ENCODE measurements at regions of chr4 and their contacts with region 1.

Region 1: DNA sequence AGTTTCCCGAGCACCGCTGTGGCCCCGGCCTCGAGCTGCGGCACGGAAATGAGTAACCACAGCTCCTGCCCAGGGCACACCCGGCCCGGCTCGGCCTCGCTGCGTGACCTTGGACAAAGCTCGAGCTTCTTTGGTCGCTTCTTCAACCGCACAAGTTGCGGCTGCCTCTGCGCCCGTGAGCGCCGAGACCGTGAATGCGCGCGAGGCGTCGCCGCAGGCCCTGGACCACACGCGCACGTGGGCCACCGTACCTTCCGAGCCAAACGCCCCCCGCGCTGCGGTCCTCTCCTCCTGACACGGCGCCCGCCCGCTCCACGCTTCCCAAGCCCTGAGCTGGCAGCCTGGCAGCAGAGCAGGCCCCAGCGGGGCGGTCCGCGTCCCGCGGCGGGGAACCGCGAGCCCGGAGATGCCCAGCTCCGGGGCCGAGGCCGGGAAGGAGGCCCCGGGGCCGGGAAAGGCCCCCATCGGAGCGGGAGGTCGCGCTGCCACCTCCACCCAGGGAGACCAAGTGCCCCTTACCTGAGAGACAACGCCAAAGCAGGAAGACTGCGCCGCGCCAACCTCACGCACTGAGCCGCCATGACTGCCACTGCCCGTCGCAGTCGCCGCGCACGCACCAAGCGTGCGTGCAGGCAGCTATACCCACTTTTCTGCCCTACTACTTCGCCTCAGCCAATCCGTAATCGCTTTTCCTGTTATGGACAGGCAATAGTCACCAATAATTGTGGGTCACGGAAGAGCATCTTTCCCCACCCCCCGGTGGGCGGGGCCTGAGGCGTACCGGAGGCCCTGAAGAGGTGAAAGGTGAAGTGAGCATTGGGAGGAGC is at the start of gene GRPEL1:
- DNase-seq: peak; percentile 100
- ATAC-seq: peak; percentile 96 to 99 (median 98)
- H3K4me3 ChIP-seq: peak within 1 kb of the TSS; percentile 68 to 99 (median 86)
- H3K27ac ChIP-seq: peak within 1 kb of the TSS; percentile 58 to 98 (median 90)
- H3K4me1 ChIP-seq: peaks cover 7 to 42% (median 30%) of the 10 kb centered on the region in 9 donors
- H3K27me3 ChIP-seq: no peaks in the 10 kb centered on the region
- CTCF ChIP-seq: peak in 1 of 9 donors; percentile 18
- total RNA-seq, gene GRPEL1: 50.8 to 83.3 (median 55.8) TPM

Region 2: DNA sequence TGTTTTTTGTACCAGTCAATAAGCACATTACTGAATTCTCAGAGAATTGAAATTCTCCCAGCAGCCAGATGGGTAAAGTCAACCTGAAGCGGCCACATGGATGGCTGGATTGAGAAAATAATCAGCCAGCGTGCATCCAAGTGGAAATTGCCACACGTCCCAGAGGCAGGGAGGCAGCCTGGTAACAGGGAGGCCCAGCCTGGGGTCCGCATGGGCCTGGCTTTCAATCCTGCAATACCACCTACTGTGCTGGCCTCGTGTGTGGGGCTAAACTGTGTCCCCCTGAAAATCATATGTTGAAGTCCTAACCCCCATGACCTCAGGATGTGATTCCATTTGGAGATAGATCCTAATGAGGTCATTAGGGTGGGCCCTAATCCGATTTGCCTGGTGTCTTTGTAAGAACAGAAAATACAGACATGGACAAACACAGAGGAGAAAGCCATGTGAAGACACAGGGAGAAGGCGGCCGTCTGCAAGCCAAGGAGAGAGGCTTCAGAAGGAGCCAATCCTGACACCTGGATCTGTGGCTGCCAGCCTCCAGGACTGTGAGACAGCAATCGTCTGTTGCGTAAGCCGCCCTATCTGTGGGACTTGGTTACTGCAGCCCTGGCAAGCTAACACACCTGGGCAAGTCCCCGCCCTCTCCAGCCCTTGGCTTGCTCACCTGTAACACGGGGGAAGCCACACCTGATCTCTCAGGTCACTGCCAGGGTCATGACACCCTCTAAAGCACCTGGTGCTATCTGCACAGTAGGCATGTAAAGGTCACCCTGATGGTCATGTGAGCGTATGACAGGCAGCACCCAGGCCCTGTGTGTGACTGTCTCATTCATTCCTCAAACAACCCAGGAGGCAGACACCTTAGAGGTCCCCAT is 957.6 kb before region 1 on chr4:
- intact Hi-C with region 1: no loop called
- DNase-seq: no peak
- ATAC-seq: peak in 1 of 8 donors; percentile 23
- H3K4me3 ChIP-seq: no peak overlapping the region
- H3K27ac ChIP-seq: no peak overlapping the region
- H3K4me1 ChIP-seq: no peaks in the 10 kb centered on the region
- H3K27me3 ChIP-seq: peaks cover 0 to 83% (median 46%) of the 10 kb centered on the region in 7 donors
- CTCF ChIP-seq: no peak

Region 3: DNA sequence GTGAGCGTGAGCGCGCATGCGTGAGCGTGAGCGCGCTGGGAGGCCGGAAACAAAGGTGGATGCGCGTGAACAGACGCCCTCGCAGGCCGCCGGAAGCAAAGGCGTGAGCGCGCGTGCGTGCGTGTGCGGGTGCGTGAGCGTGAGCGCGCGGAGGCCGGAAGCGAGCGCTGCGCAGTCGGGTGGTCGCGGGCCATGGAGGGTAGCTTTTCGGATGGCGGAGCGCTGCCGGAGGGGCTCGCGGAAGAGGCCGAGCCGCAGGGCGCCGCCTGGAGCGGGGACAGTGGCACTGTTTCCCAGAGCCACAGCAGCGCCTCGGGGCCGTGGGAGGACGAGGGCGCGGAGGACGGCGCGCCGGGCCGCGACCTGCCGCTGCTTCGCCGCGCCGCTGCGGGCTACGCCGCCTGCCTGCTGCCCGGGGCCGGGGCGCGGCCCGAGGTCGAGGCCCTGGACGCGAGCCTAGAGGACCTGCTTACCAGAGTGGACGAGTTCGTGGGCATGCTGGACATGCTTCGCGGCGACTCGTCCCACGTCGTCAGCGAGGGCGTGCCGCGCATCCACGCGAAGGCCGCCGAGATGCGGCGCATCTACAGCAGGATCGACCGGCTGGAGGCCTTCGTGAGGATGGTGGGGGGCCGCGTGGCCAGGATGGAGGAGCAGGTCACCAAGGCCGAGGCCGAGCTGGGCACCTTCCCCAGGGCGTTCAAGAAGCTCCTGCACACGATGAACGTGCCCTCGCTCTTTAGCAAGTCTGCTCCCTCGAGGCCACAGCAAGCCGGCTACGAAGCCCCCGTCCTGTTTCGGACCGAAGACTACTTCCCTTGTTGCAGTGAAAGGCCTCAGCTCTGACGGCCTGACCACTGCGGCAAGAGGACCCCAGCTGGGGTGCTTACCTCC is 351.4 kb before region 1 on chr4 and contains the start of gene BLOC1S4:
- intact Hi-C with region 1: loop called in 9 of 10 experiments (anchors 2 to 10 kb)
- DNase-seq: peak; percentile 87 to 90
- ATAC-seq: peak; percentile 91 to 96 (median 94)
- H3K4me3 ChIP-seq: peak within 1 kb of the TSS; percentile 55 to 88 (median 76)
- H3K27ac ChIP-seq: peak within 1 kb of the TSS; percentile 87 to 98 (median 94)
- H3K4me1 ChIP-seq: peaks cover 0 to 40% (median 30%) of the 10 kb centered on the region in 9 donors
- H3K27me3 ChIP-seq: no peaks in the 10 kb centered on the region
- CTCF ChIP-seq: peak in 4 of 9 donors; percentile 19 to 53 (median 30)
- total RNA-seq, gene BLOC1S4: 4.4 to 10.2 (median 7.0) TPM

Region 4: DNA sequence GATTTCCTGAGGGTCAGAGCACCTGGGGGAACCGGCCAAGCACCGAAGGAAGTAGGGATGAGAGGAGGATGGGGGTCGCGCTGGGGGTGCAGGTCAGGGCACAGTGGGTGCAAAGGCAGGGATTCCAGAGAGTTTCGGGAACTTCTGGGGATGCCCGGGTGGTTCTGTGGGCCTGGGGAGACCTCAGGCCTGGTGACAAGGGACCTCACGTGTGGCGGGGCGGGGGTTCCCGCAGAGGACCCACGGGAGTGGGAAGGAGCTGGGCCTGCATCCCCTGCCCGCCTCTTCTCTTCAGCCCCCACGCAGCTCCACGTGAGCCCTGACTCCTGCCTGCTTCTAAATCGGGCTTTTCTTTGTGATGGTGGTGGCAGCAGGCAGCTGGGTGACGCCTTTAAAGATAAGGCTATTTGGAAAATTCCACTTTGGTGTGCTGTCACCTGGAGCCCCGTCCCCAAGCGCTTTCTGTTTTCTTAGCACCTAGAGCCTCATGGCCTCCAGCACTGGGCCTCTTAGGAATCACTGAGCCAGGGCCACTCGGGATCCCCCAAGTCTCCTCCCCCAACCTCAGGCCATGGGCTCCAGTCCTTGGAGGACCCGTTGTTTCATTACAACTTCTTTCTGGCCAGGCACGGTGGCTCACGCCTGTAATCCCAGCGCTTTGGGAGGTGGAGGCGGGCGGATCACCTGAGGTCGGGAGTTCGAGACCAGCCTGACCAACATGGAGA is 165.2 kb before region 1 on chr4:
- intact Hi-C with region 1: loop called in 6 of 10 experiments (anchors 5 to 10 kb)
- DNase-seq: no peak
- ATAC-seq: peak; percentile 9 to 63 (median 21)
- H3K4me3 ChIP-seq: no peak overlapping the region
- H3K27ac ChIP-seq: peak overlapping the region in 1 of 10 donors; percentile 30
- H3K4me1 ChIP-seq: peaks cover 0 to 7% (median 4%) of the 10 kb centered on the region in 9 donors
- H3K27me3 ChIP-seq: peaks cover 0 to 6% (median 0%) of the 10 kb centered on the region in 7 donors
- CTCF ChIP-seq: no peak

Region 5: DNA sequence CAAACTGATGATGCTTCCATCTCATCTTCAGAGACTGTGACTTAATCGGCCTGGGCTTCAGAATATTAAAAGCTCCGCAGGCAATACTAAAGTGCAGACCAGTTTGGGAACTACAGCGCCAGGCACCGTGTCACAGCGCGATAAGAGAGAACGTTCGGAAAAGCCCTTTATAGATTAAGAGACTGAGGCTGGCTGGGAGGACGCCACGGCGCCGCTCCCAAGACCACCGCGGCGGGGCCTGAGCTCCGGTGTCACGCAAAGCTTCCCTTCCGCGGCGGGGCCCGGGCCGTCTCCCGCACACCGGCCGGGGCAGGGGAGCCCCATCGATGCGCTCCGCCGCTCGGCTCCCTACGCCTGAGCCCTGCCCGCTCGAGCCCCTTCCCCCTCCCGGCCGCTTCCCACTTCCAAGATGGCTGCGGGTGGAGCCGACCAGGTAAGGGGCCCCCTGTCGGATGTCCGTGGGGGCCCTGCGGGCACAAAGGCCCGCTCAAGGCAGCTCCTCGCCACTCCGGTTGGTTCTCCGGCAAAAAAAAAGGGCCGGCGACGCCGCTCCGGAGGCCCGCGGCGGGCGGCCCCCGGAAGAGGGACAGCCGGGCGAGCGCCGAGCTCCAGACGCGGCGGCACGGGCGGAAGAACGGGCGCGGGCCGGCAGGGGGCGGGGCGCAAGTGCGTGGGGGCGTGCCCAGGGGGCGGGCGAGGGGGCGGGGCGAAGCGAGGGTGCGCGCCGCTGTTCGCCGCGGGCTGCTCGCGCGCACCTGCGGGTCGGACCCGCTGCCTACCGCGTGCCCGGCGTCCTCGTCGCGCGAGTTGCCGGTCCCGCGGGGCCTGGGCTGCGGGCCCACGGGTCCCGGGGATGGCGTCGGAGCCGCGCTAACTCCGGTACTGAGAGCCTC is 158.3 kb before region 1 on chr4 and contains the start of gene TBC1D14:
- intact Hi-C with region 1: loop called in 7 of 10 experiments (anchors 1 to 10 kb)
- DNase-seq: peak; percentile 89 to 91
- ATAC-seq: peak; percentile 93 to 96 (median 95)
- H3K4me3 ChIP-seq: peak within 1 kb of the TSS; percentile 76 to 99 (median 88)
- H3K27ac ChIP-seq: peak within 1 kb of the TSS; percentile 97 to 100 (median 100)
- H3K4me1 ChIP-seq: peaks cover 16 to 55% (median 41%) of the 10 kb centered on the region in 9 donors
- H3K27me3 ChIP-seq: peaks cover 0 to 6% (median 0%) of the 10 kb centered on the region in 7 donors
- CTCF ChIP-seq: peak in 6 of 9 donors; percentile 19 to 47 (median 23)
- total RNA-seq, gene TBC1D14: 31.5 to 43.7 (median 33.5) TPM

Region 6: DNA sequence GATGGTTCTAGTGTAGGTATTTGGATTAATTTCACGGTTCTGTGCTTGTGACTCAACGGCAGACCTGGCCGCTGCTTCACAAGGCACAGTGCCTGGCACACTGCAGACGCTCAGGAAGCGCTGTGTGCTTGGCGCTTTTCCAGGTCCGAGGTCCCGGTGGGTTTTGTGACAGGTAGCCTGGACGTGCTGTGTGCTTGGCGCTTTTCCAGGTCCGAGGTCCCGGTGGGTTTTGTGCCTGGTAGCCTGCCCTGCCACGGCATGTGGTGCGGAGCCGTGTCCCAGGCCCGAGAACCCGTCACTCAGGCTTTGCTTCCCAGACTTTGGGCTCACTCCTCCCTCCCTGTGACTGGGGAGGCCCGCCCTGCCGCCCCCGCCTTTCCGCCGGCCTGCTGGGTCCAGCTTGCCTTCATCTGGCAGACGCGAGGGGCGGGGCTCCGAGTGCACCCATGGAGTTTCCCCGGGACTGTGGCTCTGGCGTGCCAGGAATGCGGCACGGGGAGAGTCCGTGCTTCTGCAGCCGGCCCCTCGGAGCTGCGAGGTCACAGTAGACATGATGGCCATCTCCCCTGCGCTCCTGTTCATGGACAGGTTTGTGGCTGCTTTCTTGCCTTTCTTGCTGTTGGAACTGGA is 113.8 kb before region 1 on chr4:
- intact Hi-C with region 1: no loop called
- DNase-seq: peak; percentile 82
- ATAC-seq: peak; percentile 86 to 94 (median 90)
- H3K4me3 ChIP-seq: peak overlapping the region in 8 of 10 donors; percentile 1 to 41 (median 34)
- H3K27ac ChIP-seq: no peak overlapping the region
- H3K4me1 ChIP-seq: peaks cover 0 to 27% (median 9%) of the 10 kb centered on the region in 9 donors
- H3K27me3 ChIP-seq: no peaks in the 10 kb centered on the region
- CTCF ChIP-seq: no peak

Region 7: DNA sequence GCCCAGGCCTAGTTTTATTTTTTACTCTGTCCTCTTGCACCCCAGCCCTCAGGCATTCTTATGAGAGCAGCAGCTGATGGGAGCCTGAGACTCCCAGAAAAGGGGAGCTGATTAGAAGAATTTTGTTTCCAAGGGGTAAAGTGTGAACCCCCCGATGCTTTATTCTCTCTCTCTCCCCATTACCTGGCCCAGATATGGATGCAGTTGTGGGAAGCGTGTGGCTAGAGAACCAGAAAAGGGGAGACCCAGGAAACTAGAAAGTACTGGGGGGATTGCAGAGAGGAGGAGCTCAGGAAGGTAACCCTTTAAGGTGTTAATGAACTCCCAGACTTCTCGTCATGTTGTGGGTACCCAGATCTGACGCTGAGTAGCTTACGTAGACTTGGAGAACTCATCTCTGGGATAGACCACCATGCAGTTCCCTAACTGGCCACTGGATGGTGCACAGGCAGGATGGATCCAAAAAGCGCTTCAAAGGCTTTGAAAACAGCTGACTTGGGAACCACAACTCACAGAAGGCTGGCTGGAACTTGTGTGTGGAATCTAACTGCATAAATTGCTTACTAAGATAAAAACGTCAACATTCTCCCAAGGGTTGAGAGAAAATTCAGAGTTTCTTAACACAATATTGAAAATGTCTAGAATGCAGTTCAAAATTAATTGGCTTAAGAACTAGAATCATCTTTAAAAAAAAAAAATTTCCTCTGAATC is 93.4 kb before region 1 on chr4:
- intact Hi-C with region 1: loop called in 8 of 10 experiments (anchors 1 to 10 kb)
- DNase-seq: peak; percentile 79 to 87
- ATAC-seq: peak; percentile 74 to 95 (median 92)
- H3K4me3 ChIP-seq: no peak overlapping the region
- H3K27ac ChIP-seq: peak overlapping the region in 1 of 10 donors; percentile 13
- H3K4me1 ChIP-seq: peaks cover 0 to 25% (median 11%) of the 10 kb centered on the region in 9 donors
- H3K27me3 ChIP-seq: no peaks in the 10 kb centered on the region
- CTCF ChIP-seq: peak; percentile 85 to 99 (median 96)

Region 8: DNA sequence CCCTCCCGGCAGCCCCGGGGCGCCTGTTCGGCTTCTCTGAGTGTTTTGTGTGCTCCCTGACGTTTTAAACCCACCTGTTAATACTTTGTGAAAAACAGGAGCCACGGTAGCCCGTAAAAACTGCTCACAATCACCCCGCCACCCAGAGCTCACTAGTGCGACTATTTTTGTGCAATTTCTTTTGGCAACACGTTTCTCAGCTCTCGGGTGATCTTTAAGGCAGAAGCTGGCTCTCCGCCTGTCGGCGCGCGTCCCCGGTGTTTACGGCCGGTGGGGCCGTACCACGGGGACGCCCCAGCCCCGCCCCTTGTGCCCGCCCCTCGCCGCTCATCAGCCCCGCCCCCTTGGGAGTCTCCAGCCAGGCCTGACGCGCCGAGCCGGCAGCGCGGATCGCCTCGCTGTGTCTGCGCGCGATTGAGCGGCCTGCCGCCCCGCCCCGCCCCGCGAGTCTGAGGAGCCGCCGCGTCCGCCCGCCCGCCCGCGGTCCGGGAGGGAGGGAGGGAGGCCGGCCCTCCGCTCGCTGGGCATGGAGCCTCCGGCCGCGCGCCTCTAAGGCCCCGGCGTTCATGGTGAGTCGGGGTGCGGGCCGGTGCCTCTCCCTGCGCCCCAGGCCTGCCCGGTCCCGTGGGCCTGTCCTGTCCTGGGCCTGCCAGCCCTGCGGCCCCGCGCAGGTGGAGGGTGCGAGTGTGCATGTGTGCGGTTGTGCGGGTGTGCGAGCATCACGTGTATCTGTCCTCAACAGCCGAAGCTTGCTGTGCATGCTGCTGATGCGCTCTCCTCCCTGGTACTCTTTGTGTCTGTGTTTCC is 80.7 kb before region 1 on chr4:
- intact Hi-C with region 1: loop called in 8 of 10 experiments (anchors 1 to 10 kb)
- DNase-seq: peak; percentile 94 to 97
- ATAC-seq: peak; percentile 95 to 98 (median 96)
- H3K4me3 ChIP-seq: peak overlapping the region; percentile 64 to 98 (median 88)
- H3K27ac ChIP-seq: peak overlapping the region; percentile 84 to 98 (median 94)
- H3K4me1 ChIP-seq: peaks cover 13 to 85% (median 57%) of the 10 kb centered on the region in 9 donors
- H3K27me3 ChIP-seq: no peaks in the 10 kb centered on the region
- CTCF ChIP-seq: peak in 2 of 9 donors; percentile 27 to 28

Region 9: DNA sequence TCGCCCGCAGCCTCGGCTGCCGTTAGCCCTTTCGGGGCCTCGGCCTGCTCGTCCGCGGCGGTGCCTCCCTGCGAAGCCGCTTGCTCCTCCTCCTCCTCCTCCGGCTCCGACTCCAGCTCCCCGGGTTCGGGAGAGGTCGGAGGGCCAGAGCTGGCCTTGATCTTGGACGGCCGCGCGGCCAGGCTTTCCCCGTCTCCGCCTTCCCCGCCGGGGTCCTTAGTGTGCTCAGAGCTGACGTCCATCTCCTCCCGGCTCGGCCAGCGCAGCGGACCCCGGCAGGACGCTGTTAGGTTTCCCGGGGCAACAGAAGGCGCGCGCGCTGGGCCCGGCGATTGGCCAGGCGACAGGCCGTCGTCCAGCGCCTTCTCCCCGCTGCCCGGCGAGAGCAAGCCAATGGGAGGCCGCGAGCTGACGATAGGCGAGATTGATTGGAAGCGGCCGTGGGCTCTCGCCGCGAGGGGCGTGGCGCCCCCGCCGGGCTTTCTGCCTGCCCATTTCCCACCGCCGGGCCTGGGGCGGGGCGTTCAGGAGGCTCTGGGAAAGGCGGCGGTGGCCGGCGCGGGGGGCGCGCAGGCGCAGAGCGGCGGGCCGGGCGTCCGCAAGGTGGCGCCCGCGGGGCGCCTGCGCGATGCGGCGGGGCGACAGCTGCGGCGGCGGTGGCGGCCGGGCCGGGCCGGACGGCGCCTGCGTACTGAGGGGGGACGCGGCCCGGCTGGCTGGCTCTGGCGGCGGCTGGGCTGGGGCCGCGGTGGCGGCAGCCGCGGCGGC is 24.8 kb before region 1 on chr4 and contains the start of gene TADA2B:
- intact Hi-C with region 1: loop called in 4 of 10 experiments (anchors 1 to 2 kb)
- DNase-seq: peak; percentile 96 to 98
- ATAC-seq: peak; percentile 94 to 97 (median 97)
- H3K4me3 ChIP-seq: peak within 1 kb of the TSS; percentile 83 to 100 (median 99)
- H3K27ac ChIP-seq: peak within 1 kb of the TSS; percentile 86 to 96 (median 94)
- H3K4me1 ChIP-seq: peaks cover 21 to 55% (median 51%) of the 10 kb centered on the region in 9 donors
- H3K27me3 ChIP-seq: no peaks in the 10 kb centered on the region
- CTCF ChIP-seq: peak in 8 of 9 donors; percentile 28 to 57 (median 44)
- total RNA-seq, gene TADA2B: 26.2 to 40.8 (median 31.5) TPM

Region 10: DNA sequence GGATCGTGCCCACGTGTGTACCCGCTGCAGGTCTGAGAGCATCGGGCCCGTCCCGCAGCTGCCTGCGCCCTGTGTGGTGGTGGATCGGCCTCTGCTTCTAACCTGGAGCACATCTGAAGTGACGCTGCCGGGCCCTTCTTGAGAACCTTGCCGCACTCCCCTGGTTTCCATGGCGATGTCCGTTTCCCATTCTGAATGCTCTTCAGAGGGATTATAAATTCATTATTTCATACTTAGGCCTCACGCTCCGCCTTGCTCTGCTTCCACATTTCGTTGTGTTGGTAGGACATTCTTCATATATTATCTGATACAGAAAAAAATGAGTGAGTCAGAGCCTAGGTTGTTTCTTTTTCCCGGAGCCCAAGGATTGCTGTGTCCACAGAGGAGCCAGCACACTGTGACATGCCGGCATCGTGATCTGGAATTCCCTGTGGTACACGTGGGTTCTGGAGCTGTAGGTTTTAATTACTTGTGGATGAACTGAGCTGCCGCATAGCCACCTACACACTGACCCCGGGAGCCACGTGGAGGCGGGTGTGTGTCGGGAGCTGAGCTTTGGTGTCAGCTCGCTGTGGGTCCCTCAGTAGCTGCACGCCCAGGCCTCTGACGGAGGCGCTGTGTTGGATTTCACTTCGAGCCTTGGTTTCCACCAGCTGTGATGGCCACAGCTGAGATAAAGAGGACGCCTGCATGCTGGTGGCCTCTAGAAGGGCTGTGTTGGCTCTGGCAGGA is 303.7 kb after region 1 on chr4:
- intact Hi-C with region 1: no loop called
- DNase-seq: no peak
- ATAC-seq: no peak
- H3K4me3 ChIP-seq: no peak overlapping the region
- H3K27ac ChIP-seq: no peak overlapping the region
- H3K4me1 ChIP-seq: no peaks in the 10 kb centered on the region
- H3K27me3 ChIP-seq: peaks cover 0 to 25% (median 0%) of the 10 kb centered on the region in 7 donors
- CTCF ChIP-seq: no peak